Heart right ventricle (tissue), 16 donors: ENCODE measurements at regions of chr11 and their contacts with region 1.

Region 1: DNA sequence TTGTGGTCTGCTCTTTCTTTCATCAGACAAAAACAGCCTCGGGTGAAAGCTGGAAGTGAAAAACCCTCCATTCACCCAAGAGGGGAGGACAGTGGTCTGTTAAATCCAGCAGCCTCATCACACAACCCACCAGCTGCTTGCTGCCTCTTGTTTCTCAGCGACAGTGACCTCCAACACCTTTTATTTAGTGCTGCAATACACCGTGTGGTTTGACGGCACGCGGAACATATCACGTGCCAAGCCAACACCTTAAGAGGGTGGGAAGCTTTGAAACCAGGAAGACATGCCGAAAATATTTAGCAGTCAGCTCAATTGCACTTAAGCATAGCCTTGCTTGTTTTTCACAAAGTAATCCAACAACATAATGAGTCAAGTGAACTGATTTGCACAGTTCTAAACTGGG is 39.8 kb upstream of the POGLUT3 start:
- DNase-seq: no peak
- ATAC-seq: peak in 1 of 8 donors; percentile 39
- H3K4me3 ChIP-seq: no peak overlapping the region
- H3K27ac ChIP-seq: no peak overlapping the region
- H3K4me1 ChIP-seq: no peaks in the 10 kb centered on the region
- H3K27me3 ChIP-seq: no peaks in the 10 kb centered on the region
- CTCF ChIP-seq: no peak

Region 2: GRCh38 chr11:107849790-107850189 is 688.2 kb before region 1 on chr11:
- intact Hi-C with region 1: no loop called
- DNase-seq: no peak
- ATAC-seq: no peak
- H3K4me3 ChIP-seq: no peak overlapping the region
- H3K27ac ChIP-seq: no peak overlapping the region
- H3K4me1 ChIP-seq: no peaks in the 10 kb centered on the region
- H3K27me3 ChIP-seq: no peaks in the 10 kb centered on the region
- CTCF ChIP-seq: no peak

Region 3: DNA sequence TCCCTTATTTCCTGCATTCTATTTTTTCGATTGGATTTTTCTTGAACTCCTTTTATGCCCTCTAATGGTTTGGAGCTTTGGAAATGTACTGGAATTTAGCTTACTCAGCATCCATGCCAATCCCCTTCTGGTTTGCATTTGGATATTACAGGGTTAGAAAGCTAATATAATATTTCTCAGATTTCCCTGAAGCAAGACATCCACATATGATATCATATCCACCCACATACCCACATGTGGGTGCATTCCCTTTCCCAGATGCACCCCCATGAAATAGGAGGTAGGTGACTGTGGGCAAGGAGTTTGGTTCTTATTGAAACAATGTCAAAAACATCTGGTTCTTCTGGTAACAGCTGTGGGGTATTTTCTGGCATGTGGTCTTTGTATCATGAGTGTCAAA is 94.0 kb after region 1 on chr11:
- intact Hi-C with region 1: loop called in 1 of 10 experiments (anchors 5 kb)
- DNase-seq: no peak
- ATAC-seq: no peak
- H3K4me3 ChIP-seq: no peak overlapping the region
- H3K27ac ChIP-seq: no peak overlapping the region
- H3K4me1 ChIP-seq: no peaks in the 10 kb centered on the region
- H3K27me3 ChIP-seq: peaks cover 0 to 5% (median 0%) of the 10 kb centered on the region in 7 donors
- CTCF ChIP-seq: no peak